Cardiac septum (tissue), 1 donor: ENCODE measurements at regions of chr1 and their contacts with region 1.

Region 1: GRCh38 chr1:37989361-37989930 is 376 bp downstream of the SF3A3 start:
- DNase-seq: no peak

Region 2: DNA sequence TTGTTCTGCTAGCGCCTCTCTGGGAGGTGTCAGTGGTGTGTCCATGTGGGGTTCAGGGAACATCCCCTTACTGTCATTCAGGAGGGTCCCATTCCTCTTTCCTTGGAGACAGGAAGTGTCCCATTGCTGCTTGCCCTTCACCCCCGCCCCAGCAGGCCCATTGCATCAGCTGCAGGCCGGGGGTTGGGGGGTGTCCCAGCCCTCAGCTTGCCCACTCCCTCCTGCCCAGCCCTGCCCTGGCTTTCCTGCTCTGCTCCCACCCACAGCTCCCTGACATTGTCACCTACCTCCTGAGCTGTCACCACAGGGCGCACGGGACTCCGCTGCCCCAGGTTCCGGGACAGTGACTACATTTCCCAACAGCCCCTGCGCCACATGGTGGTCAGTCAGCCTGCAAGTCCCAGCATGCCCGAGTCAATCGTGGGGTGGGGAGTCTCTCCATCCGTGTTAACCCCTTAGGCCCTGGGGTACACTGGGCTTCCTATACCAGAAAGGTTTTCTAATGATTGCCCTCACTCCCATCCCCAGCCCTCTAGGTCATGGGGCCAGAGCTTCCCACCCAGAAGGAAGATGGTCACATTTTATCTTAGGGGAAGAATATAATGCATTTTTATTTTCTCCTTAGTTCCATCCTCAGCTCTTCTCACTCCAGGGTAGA is 42.6 kb before region 1 on chr1 and contains the start of gene INPP5B:
- intact Hi-C with region 1: loop called (anchors 5 kb)
- DNase-seq: peak; percentile 95
- total RNA-seq, gene INPP5B: 13.7 TPM

Region 3: GRCh38 chr1:38012363-38013226 is 23.1 kb after region 1 on chr1 and contains the start of gene UTP11:
- intact Hi-C with region 1: loop called (anchors 2 kb)
- DNase-seq: peak; percentile 97
- total RNA-seq, gene UTP11: 29.8 TPM